A549 (cell line): ENCODE measurements at regions of chr3 and their contacts with region 1.

Region 1: GRCh38 chr3:46935168-46935858 is 41.2 kb downstream of the CCDC12 start:
- DNase-seq: peak; percentile 80 to 83
- ATAC-seq: peak; percentile 91 to 92
- H3K4me3 ChIP-seq: 0 out of 3 replicates have a peak overlapping the region, but pooled peaks have one; percentile 6
- H3K27ac ChIP-seq: peak overlapping the region; percentile 85 to 88
- H3K4me1 ChIP-seq: peaks cover 83% of the 10 kb centered on the region
- CTCF ChIP-seq: peak; percentile 34; the same call in 2 of the 3 replicates
- EP300 ChIP-seq: no peak
- POLR2A ChIP-seq: no peak
- RAD21 ChIP-seq: peak; percentile 14 to 15; a peak in 2 of 5 replicates

Region 2: GRCh38 chr3:46917257-46917656 is 18.1 kb before region 1 on chr3:
- CTCF ChIA-PET with region 1: interaction called, 62 read pairs
- POLR2A ChIA-PET with region 1: no interaction called
- DNase-seq: no peak
- ATAC-seq: no peak
- H3K4me3 ChIP-seq: no peak overlapping the region
- H3K27ac ChIP-seq: no peak overlapping the region
- H3K4me1 ChIP-seq: peaks cover 8% of the 10 kb centered on the region
- CTCF ChIP-seq: no peak
- EP300 ChIP-seq: no peak
- POLR2A ChIP-seq: no peak
- RAD21 ChIP-seq: no peak

Region 3: DNA sequence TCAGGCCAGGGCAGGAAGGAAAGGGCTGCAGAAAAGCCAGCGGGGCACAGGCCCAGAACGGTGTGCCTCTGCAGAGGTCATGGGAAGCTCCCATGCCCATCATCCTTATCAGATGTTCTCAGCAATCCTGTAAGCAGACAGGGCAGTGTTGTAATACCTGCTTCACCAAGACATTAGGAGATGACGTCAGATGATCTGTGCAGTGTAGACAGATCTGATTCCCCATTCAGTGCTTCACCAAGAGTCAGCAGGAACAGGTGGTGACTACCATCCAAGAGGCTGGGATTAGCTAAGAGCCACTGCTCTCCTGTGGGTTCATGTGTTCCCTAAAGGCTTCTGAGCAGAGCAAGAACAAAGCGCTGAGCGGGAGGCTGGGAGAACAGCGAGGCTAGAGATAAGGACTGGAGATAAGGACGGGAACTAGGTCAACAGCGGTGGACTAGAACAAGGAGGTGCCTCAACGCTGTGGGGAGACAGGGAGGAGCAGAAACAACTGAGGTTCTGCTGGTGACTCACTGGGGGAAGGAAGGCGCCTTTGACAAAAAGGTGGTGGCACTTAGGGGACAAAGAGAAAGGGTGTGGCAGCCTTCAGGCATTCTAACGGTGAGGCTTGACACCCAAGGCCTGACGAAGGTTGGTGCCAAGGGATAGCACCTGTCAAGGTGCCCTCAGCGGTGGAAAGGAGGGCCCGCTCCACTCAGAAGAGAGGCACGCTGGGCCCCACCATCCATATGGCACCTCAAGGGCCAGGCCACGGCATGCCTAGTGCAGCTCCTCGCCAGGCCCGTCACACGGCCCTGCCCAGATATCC is 12.9 kb after region 1 on chr3:
- CTCF ChIA-PET with region 1: interaction called, 27 read pairs
- POLR2A ChIA-PET with region 1: interaction called, 8 read pairs
- DNase-seq: peak; percentile 55 to 89
- ATAC-seq: peak; percentile 72 to 76
- H3K4me3 ChIP-seq: no peak overlapping the region
- H3K27ac ChIP-seq: peak overlapping the region; percentile 90 to 97
- H3K4me1 ChIP-seq: peaks cover 85% of the 10 kb centered on the region
- CTCF ChIP-seq: no peak
- EP300 ChIP-seq: peak in 1 of 2 experiments; percentile 48; a peak in 2 of 5 replicates
- POLR2A ChIP-seq: no peak
- RAD21 ChIP-seq: no peak; a peak in 1 of 5 replicates

Region 4: GRCh38 chr3:46976326-46977190 is 41.2 kb after region 1 on chr3 and contains the start of gene CCDC12:
- CTCF ChIA-PET with region 1: interaction called, 7 read pairs
- POLR2A ChIA-PET with region 1: interaction called, 33 read pairs
- DNase-seq: peak; percentile 95 to 97
- ATAC-seq: peak; percentile 72 to 92
- H3K4me3 ChIP-seq: peak within 1 kb of the TSS; percentile 74
- H3K27ac ChIP-seq: peak within 1 kb of the TSS; percentile 91 to 97
- H3K4me1 ChIP-seq: peaks cover 51% of the 10 kb centered on the region
- CTCF ChIP-seq: no peak
- EP300 ChIP-seq: no peak
- POLR2A ChIP-seq: peak; percentile 37; the same call in 1 of the 2 replicates
- RAD21 ChIP-seq: no peak
- polyA plus RNA-seq, gene CCDC12: 21.7 and 34.8 TPM in 2 replicates

Region 5: GRCh38 chr3:46998121-46998851 is 63.0 kb after region 1 on chr3:
- CTCF ChIA-PET with region 1: interaction called, 11 read pairs
- POLR2A ChIA-PET with region 1: no interaction called
- DNase-seq: peak; percentile 64 to 69
- ATAC-seq: peak; percentile 77 to 91
- H3K4me3 ChIP-seq: no peak overlapping the region
- H3K27ac ChIP-seq: peak overlapping the region in 1 of 2 experiments; percentile 53; a peak in 4 of 6 replicates
- H3K4me1 ChIP-seq: peaks cover 12% of the 10 kb centered on the region
- CTCF ChIP-seq: peak; percentile 64
- EP300 ChIP-seq: no peak
- POLR2A ChIP-seq: no peak
- RAD21 ChIP-seq: peak; percentile 80 to 81

Region 6: DNA sequence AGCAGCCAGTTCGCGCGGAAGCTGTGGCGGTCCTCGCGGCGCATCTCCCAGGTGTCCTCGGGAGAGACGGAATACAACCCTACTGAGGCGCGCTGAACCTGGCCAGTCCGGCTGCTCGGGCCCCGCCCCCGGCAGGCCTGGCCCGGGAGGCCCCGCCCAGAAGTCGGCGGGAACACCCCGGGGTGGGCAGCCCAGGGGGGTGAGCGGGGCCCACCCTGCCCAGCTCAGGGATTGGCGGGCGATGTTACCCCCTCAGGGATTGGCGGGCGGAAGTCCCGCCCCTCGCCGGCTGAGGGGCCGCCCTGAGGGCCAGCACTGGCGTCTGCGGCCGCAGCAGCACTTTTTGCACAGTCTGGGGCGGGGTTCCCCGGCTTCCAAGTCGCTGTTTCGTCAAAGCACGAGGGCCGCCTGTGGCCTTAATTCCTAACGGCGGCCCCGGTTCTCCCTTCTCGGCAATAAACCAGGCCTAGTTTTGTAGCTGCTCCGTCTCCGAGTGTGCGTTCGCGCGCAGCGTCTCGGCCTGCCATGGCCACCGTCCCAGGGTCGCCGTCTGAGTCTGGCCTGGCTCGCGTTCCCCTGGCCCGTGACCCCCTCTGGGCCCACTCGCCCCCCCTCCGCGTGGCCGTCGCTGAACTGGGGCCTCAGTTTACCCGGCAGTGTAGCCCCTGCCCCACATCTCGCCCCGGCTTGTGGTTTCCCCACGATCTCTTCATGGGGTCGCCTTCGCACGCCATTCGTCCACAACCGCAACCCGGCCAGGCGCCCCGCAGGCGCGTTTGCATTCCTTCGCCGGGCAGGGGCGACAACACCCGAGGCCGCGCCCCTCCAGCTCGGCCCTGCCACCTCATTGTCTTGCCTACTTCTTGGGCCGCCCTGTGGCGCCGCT is 74.2 kb after region 1 on chr3:
- CTCF ChIA-PET with region 1: no interaction called
- POLR2A ChIA-PET with region 1: no interaction called
- DNase-seq: no peak
- ATAC-seq: no peak
- H3K4me3 ChIP-seq: no peak overlapping the region
- H3K27ac ChIP-seq: no peak overlapping the region
- H3K4me1 ChIP-seq: no peaks in the 10 kb centered on the region
- CTCF ChIP-seq: no peak
- EP300 ChIP-seq: no peak
- POLR2A ChIP-seq: no peak
- RAD21 ChIP-seq: no peak